T-cell (primary cell): ENCODE measurements at regions of chr6 and their contacts with region 1.

Region 1: DNA sequence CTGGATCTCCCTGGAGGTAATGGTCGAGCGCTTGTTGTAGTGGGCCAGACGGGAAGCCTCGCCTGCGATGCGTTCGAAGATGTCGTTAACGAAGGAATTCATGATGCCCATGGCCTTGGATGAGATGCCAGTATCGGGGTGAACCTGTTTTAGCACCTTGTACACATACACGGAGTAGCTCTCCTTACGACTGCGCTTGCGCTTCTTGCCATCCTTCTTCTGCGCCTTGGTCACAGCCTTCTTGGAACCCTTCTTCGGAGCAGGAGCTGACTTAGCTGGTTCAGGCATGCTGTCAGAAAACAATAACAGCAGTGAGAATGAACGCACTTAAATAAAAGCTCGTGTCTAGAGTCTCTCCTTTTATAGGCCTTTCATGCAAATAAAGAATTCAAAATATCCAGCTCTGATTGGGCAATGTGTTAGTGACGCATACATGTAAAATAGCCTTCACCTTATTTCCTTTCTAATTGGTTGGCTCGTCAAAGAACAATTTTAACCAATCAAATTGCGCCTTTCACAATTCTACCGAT is 129.2 kb downstream of the HFE start:
- DNase-seq: peak; percentile 56 to 93 (median 76)
- ATAC-seq: peak; percentile 77 to 87 (median 83)
- H3K4me3 ChIP-seq: peak overlapping the region; percentile 73 to 91
- H3K4me3 Mint-ChIP-seq: no peak overlapping the region
- H3K27ac ChIP-seq: peak overlapping the region; percentile 94
- H3K27ac Mint-ChIP-seq: no peak overlapping the region
- H3K4me1 ChIP-seq: peaks cover 13 to 32% of the 10 kb centered on the region in 2 experiments
- H3K4me1 Mint-ChIP-seq: peaks cover 0 to 8% (median 5%) of the 10 kb centered on the region in 3 donors
- H3K27me3 ChIP-seq: no peaks in the 10 kb centered on the region
- H3K27me3 Mint-ChIP-seq: no peaks in the 10 kb centered on the region

Region 2: DNA sequence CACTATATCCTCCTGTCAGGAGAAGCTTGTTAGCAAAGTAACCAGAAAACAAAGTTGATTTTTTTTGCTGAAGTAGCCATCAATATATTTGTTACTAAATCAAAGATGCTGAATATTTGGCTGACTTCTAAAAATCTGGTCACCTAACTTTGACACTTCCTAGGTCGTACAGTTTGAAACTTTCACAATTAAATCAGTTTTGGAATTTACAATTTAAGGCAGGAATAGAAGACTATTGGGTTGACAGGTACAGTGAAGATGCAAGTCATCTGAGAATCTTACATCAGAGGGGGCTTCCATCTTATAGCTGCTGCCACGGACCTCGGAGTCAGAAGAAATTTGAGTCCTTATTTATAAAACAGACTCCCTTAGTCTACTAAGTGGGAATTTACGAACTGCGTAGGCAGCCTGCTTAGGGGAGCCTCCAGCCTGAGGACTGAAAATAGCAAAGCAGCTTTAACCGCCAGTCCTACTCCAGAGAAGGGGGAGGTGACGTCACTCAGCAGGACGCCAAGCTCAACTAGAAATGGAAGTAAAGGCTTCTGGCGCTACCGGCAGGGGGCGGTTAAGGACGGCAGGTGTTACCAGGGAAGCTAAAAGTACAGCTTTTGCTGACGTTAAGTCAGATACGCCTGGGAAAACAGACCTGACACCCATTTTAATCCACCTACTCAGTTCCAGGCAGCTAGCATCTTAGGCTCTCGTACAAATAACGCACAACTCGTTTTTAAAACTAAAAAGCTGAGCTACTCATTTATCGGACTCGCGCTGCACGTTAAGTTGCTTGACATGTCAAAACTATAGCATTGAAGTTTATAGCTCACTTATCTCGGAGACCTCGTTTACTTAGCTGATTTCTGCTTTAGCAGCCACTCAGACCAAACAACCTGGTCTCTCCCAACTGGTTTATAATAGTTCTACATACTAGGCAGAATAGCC is 190.3 kb before region 1 on chr6:
- CTCF ChIA-PET with region 1: interaction called in 1 of 2 experiments, 7 read pairs
- POLR2A ChIA-PET with region 1: interaction called, 7 to 14 read pairs
- DNase-seq: peak; percentile 70 to 98 (median 96)
- ATAC-seq: peak; percentile 33 to 46 (median 36)
- H3K4me3 ChIP-seq: peak overlapping the region; percentile 63 to 88
- H3K4me3 Mint-ChIP-seq: peak overlapping the region; percentile 82 to 93 (median 92)
- H3K27ac ChIP-seq: peak overlapping the region; percentile 93
- H3K27ac Mint-ChIP-seq: peak overlapping the region; percentile 93 to 99
- H3K4me1 ChIP-seq: peaks cover 22 to 24% of the 10 kb centered on the region in 2 experiments
- H3K4me1 Mint-ChIP-seq: peaks cover 43 to 53% (median 44%) of the 10 kb centered on the region in 3 donors
- H3K27me3 ChIP-seq: no peaks in the 10 kb centered on the region
- H3K27me3 Mint-ChIP-seq: peaks cover 0 to 2% of the 10 kb centered on the region in 2 donors

Region 3: GRCh38 chr6:26175428-26176181 is 40.8 kb before region 1 on chr6:
- CTCF ChIA-PET with region 1: interaction called in 1 of 2 experiments, 9 read pairs
- POLR2A ChIA-PET with region 1: interaction called, 9 to 19 read pairs
- DNase-seq: peak in 24 of 35 experiments; percentile 30 to 85 (median 50)
- ATAC-seq: no peak
- H3K4me3 ChIP-seq: no peak overlapping the region
- H3K4me3 Mint-ChIP-seq: peak overlapping the region in 1 of 3 donors; percentile 5
- H3K27ac ChIP-seq: peak overlapping the region; percentile 37
- H3K27ac Mint-ChIP-seq: peak overlapping the region; percentile 58 to 73
- H3K4me1 ChIP-seq: peaks cover 11 to 15% of the 10 kb centered on the region in 2 experiments
- H3K4me1 Mint-ChIP-seq: peaks cover 36 to 39% (median 37%) of the 10 kb centered on the region in 3 donors
- H3K27me3 ChIP-seq: no peaks in the 10 kb centered on the region
- H3K27me3 Mint-ChIP-seq: no peaks in the 10 kb centered on the region

Region 4: GRCh38 chr6:26204332-26205165 is 11.9 kb before region 1 on chr6:
- CTCF ChIA-PET with region 1: interaction called, 4 to 73 read pairs
- POLR2A ChIA-PET with region 1: interaction called, 145 to 526 read pairs
- DNase-seq: peak; percentile 73 to 96 (median 82)
- ATAC-seq: peak; percentile 63 to 70 (median 68)
- H3K4me3 ChIP-seq: peak overlapping the region; percentile 73 to 98
- H3K4me3 Mint-ChIP-seq: no peak overlapping the region
- H3K27ac ChIP-seq: peak overlapping the region; percentile 93
- H3K27ac Mint-ChIP-seq: no peak overlapping the region
- H3K4me1 ChIP-seq: peaks cover 23 to 37% of the 10 kb centered on the region in 2 experiments
- H3K4me1 Mint-ChIP-seq: peaks cover 17 to 28% (median 24%) of the 10 kb centered on the region in 3 donors
- H3K27me3 ChIP-seq: no peaks in the 10 kb centered on the region
- H3K27me3 Mint-ChIP-seq: no peaks in the 10 kb centered on the region

Region 5: GRCh38 chr6:26249957-26250697 is 33.7 kb after region 1 on chr6:
- CTCF ChIA-PET with region 1: interaction called, 3 to 50 read pairs
- POLR2A ChIA-PET with region 1: interaction called, 10 read pairs
- DNase-seq: peak; percentile 58 to 87 (median 79)
- ATAC-seq: peak; percentile 71 to 76 (median 76)
- H3K4me3 ChIP-seq: peak overlapping the region; percentile 74 to 97
- H3K4me3 Mint-ChIP-seq: peak overlapping the region; percentile 93 to 98 (median 93)
- H3K27ac ChIP-seq: peak overlapping the region; percentile 83
- H3K27ac Mint-ChIP-seq: peak overlapping the region; percentile 88 to 93
- H3K4me1 ChIP-seq: peaks cover 12 to 24% of the 10 kb centered on the region in 2 experiments
- H3K4me1 Mint-ChIP-seq: peaks cover 29 to 47% (median 42%) of the 10 kb centered on the region in 3 donors
- H3K27me3 ChIP-seq: no peaks in the 10 kb centered on the region
- H3K27me3 Mint-ChIP-seq: no peaks in the 10 kb centered on the region

Region 6: GRCh38 chr6:26322645-26323482 is 106.4 kb after region 1 on chr6:
- CTCF ChIA-PET with region 1: no interaction called
- POLR2A ChIA-PET with region 1: interaction called in 1 of 2 experiments, 10 read pairs
- DNase-seq: peak in 28 of 35 experiments; percentile 24 to 81 (median 49)
- ATAC-seq: peak; percentile 55 to 71 (median 62)
- H3K4me3 ChIP-seq: peak overlapping the region; percentile 62 to 73
- H3K4me3 Mint-ChIP-seq: peak overlapping the region; percentile 82 to 87 (median 82)
- H3K27ac ChIP-seq: peak overlapping the region; percentile 53
- H3K27ac Mint-ChIP-seq: peak overlapping the region; percentile 28 to 34
- H3K4me1 ChIP-seq: peaks cover 2 to 21% of the 10 kb centered on the region in 2 experiments
- H3K4me1 Mint-ChIP-seq: peaks cover 23 to 32% (median 25%) of the 10 kb centered on the region in 3 donors
- H3K27me3 ChIP-seq: peaks cover 6 to 15% of the 10 kb centered on the region in 2 experiments
- H3K27me3 Mint-ChIP-seq: peaks cover 8 to 18% of the 10 kb centered on the region in 2 donors

Region 7: DNA sequence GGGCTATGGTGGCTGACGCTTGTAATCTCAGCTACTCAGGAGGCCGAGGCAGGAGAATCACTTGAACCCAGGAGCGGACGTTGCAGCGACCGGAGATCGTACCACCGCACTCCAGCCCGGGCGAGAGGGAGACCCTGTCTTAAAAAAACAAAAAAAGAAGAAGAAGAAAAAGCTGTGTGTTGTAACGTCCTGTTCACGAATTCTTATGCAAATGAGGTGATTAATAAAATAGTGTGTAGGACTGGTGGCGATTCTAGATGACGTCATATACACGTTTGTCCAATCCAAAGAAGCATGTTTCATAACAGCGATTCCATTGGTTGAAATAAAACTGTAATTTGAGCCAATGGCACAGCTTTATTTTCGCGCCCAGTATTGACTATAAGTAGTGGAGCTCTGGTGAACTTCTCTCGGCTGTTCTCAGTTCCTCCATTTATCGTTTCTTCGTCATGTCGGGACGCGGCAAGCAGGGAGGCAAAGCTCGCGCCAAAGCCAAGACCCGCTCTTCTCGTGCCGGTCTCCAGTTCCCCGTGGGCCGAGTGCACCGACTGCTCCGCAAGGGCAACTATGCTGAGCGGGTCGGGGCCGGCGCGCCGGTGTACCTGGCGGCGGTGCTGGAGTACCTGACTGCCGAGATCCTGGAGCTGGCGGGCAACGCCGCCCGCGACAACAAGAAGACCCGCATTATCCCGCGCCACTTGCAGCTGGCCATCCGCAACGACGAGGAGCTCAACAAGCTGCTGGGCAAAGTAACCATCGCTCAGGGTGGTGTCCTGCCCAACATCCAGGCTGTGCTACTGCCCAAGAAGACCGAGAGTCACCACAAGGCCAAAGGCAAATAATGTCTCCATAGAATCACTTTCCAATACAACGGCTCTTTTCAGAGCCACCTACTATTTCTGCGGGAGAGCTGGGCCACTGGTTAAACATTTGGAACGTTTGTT is 1648.8 kb after region 1 on chr6:
- CTCF ChIA-PET with region 1: no interaction called
- POLR2A ChIA-PET with region 1: interaction called in 1 of 2 experiments, 15 read pairs
- DNase-seq: peak; percentile 30 to 95 (median 62)
- ATAC-seq: peak; percentile 78 to 85 (median 80)
- H3K4me3 ChIP-seq: peak overlapping the region; percentile 76 to 96
- H3K4me3 Mint-ChIP-seq: peak overlapping the region; percentile 98 to 99 (median 98)
- H3K27ac ChIP-seq: peak overlapping the region; percentile 78
- H3K27ac Mint-ChIP-seq: peak overlapping the region; percentile 89 to 96
- H3K4me1 ChIP-seq: peaks cover 14 to 38% of the 10 kb centered on the region in 2 experiments
- H3K4me1 Mint-ChIP-seq: peaks cover 43 to 48% (median 45%) of the 10 kb centered on the region in 3 donors
- H3K27me3 ChIP-seq: no peaks in the 10 kb centered on the region
- H3K27me3 Mint-ChIP-seq: no peaks in the 10 kb centered on the region